Activated CD4-positive, alpha-beta T cell treated with anti-CD3 and anti-CD28 coated beads, Interleukin-2, amount 10 ng/mL, durations not matched to agents 24 days and 14 days (primary cell): ENCODE measurements at regions of chr3 and their contacts with region 1.

Region 1: DNA sequence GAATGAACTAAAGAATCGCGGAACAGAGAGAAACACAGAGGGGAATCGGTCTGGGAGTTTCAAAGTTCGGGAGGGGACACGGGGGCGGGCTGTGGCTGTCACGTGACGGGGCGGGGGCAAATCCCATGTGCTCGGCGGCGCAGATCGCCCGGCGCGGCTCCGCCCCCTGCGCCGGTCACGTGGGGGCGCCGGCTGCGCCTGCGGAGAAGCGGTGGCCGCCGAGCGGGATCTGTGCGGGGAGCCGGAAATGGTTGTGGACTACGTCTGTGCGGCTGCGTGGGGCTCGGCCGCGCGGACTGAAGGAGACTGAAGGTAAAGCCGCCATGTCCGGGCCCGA is at the start of gene EIF4G1:
- DNase-seq: peak; percentile 98
- H3K4me3 Mint-ChIP-seq: peak within 1 kb of the TSS; percentile 89
- H3K27ac Mint-ChIP-seq: peak within 1 kb of the TSS; percentile 89
- H3K4me1 Mint-ChIP-seq: peaks cover 28% of the 10 kb centered on the region
- H3K27me3 Mint-ChIP-seq: no peaks in the 10 kb centered on the region
- total RNA-seq, gene EIF4G1: 680 and 700 TPM in 2 replicates

Region 2: DNA sequence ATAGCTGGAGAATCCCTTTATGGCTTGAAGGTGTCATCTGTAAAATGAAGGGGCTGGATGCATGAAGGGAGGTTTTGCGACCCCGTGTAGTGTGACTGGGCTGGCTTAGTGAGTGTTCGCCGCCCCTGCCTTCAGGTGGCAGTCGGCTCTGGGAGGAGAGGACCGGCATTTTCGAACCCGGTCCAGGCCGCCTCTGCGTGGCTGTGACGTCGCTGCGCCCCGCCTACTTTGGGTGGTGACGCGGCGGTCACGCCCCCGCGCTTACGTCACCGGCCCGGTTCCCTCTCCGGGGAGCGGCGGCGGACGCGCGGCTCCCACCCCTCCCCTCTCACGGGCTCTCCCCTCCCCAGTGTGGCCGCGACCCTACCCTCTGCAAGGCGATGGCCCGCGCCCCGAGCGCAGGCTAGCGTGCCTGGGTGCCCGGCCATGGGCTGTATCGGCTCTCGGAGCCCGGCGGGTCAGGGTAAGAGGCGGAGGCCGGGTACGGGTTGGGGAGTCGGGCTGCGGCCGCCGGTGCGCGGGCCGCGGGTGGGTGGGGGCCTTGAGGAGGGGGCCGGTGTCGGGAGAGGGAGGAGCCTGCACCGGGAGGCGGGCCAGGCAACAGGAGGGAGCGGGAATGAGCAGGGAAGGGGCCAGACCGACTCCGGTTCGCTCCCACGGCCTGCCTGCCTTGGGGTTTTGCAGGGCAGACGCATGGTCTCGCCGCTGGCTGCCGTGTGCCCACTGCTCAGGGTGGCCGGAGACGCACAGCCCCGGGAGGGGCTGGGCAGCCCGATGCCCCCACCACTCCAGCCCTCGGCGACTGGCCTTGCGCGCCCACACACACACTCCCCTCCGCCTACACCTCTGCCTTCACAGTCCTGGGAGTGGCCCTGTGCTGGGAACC is 21.6 kb after region 1 on chr3:
- intact Hi-C with region 1: loop called (anchors 1 kb)
- DNase-seq: peak; percentile 98
- H3K4me3 Mint-ChIP-seq: peak overlapping the region; percentile 89
- H3K27ac Mint-ChIP-seq: peak overlapping the region; percentile 92
- H3K4me1 Mint-ChIP-seq: peaks cover 58% of the 10 kb centered on the region
- H3K27me3 Mint-ChIP-seq: no peaks in the 10 kb centered on the region